ENCODE measurements at regions of chr12 and their contacts with region 1.

Region 1: DNA sequence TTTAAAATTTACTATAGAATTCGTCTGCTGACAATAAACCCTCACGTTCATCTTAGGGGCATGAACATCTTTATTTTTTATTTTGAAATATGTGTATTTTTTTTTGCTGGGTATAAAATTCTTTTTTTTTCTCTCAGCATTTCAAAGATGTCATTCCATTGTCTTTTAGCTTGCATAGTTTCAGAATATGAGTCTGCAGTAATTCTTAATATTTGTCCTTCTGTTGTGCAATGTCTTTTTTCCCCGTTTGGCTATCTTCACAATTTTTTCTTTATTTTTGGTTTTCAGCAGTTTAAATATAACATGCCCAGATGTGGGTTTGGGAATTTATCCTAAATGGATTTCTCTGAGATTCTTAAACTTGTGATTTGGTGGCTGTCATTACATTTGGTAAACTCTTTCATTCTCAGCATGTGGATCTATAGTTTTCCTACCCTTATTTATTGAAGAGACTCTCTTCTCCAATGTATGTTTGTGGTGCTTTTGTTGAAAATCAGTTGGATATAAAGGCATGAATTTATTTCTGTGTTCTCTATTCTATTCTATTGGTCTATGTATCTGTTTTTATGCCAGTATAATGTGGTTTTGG is 37.8 kb upstream of the PLBD1 start:
- DNase-seq: no peak
- ATAC-seq: no peak
- H3K4me3 ChIP-seq: no peak overlapping the region
- H3K27ac ChIP-seq: no peak overlapping the region
- H3K4me1 ChIP-seq: peaks cover 0 to 10% (median 0%) of the 10 kb centered on the region in 9 donors
- H3K27me3 ChIP-seq: no peaks in the 10 kb centered on the region
- CTCF ChIP-seq: no peak

Region 2: DNA sequence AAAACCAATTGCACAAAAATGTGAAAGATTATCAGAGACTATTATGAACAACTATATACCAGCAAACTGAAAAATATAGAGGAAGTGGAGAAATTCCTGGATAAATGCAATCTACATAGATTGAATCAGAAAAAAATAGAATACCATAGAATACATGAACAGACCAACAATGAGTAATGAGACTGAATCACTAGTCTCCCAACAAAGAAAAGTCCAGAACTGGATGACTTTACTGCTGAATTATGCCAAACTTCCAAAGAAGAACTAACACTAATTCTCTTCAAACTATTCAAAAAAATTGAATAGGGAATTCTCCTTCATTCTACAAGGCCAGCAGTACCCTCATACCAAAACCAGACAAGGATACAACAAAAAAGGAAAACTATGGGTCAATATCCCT is 30.3 kb after region 1 on chr12:
- intact Hi-C with region 1: loop called in 1 of 10 experiments (anchors 1 kb)
- DNase-seq: no peak
- ATAC-seq: no peak
- H3K4me3 ChIP-seq: no peak overlapping the region
- H3K27ac ChIP-seq: no peak overlapping the region
- H3K4me1 ChIP-seq: no peaks in the 10 kb centered on the region
- H3K27me3 ChIP-seq: no peaks in the 10 kb centered on the region
- CTCF ChIP-seq: no peak

Region 3: DNA sequence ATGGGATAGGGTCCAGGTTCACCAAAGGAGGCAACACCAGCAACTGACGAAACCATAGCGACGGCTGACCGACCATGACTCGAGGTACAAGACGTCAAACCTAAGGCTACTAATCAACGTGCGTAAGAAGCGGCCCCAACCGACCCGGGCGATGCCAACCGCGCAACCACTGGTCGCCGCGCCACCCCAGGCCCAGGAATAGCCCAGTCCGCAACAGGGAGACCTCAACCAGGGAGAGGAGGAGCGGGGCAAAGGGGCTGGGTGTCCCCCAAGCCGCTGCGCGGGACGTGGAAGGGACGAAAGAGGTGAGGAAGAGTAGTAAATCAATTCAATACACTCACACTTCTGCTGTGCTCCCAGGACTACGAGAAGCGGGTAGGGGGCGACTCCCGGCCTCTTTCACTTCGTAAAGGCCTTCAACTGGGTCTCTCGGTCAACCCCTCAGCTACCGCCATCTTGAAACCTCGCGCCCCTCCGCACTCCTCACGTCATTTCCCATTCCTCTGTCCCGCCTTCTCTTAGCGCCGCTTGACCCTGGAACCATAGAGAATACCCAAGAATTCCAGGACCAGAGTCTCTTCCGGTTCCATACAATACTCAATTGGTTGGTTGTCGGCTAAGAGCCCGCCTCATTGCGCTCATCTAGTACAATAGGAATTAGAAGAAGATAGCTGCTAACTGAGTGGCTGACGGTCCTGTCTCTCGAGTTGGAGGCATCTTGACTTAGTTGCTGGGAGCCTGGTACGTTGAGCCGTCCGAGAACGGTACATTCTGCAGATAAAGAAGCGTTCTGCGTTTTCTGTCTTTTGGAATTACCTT is 197.7 kb after region 1 on chr12 and contains the starts of genes C12orf60 and WBP11:
- intact Hi-C with region 1: no loop called
- DNase-seq: peak; percentile 84 to 97
- ATAC-seq: peak; percentile 100
- H3K4me3 ChIP-seq: peak within 1 kb of the TSS; percentile 69 to 98 (median 88)
- H3K27ac ChIP-seq: peak within 1 kb of the TSS; percentile 55 to 95 (median 88)
- H3K4me1 ChIP-seq: peaks cover 0 to 31% (median 26%) of the 10 kb centered on the region in 9 donors
- H3K27me3 ChIP-seq: no peaks in the 10 kb centered on the region
- CTCF ChIP-seq: no peak
- total RNA-seq, gene C12orf60: 1.2 to 5.8 (median 3.7) TPM
- total RNA-seq, gene WBP11: 47.6 to 62.3 (median 56.0) TPM